ENCODE measurements at regions of chr7 and their contacts with region 1.

Region 1: GRCh38 chr7:80095545-80095944 is 39.1 kb upstream of the GNAI1 start:
- DNase-seq: no peak
- ATAC-seq: peak in 1 of 2 experiments; percentile 44; a peak in 1 of 6 replicates
- H3K4me3 ChIP-seq: no peak overlapping the region
- H3K27ac ChIP-seq: no peak overlapping the region
- H3K4me1 ChIP-seq: no peaks in the 10 kb centered on the region
- CTCF ChIP-seq: peak; percentile 58
- EP300 ChIP-seq: no peak
- POLR2A ChIP-seq: no peak
- RAD21 ChIP-seq: peak; percentile 48 to 68

Region 2: GRCh38 chr7:80039251-80039884 is 56.2 kb before region 1 on chr7:
- CTCF ChIA-PET with region 1: no interaction called
- POLR2A ChIA-PET with region 1: no interaction called
- DNase-seq: no peak
- ATAC-seq: no peak
- H3K4me3 ChIP-seq: no peak overlapping the region
- H3K27ac ChIP-seq: no peak overlapping the region
- H3K4me1 ChIP-seq: no peaks in the 10 kb centered on the region
- CTCF ChIP-seq: no peak
- EP300 ChIP-seq: no peak
- POLR2A ChIP-seq: no peak
- RAD21 ChIP-seq: no peak

Region 3: GRCh38 chr7:80066646-80067045 is 28.9 kb before region 1 on chr7:
- CTCF ChIA-PET with region 1: no interaction called
- POLR2A ChIA-PET with region 1: no interaction called
- DNase-seq: no peak
- ATAC-seq: no peak
- H3K4me3 ChIP-seq: no peak overlapping the region
- H3K27ac ChIP-seq: no peak overlapping the region
- H3K4me1 ChIP-seq: no peaks in the 10 kb centered on the region
- CTCF ChIP-seq: no peak
- EP300 ChIP-seq: no peak
- POLR2A ChIP-seq: no peak
- RAD21 ChIP-seq: no peak

Region 4: DNA sequence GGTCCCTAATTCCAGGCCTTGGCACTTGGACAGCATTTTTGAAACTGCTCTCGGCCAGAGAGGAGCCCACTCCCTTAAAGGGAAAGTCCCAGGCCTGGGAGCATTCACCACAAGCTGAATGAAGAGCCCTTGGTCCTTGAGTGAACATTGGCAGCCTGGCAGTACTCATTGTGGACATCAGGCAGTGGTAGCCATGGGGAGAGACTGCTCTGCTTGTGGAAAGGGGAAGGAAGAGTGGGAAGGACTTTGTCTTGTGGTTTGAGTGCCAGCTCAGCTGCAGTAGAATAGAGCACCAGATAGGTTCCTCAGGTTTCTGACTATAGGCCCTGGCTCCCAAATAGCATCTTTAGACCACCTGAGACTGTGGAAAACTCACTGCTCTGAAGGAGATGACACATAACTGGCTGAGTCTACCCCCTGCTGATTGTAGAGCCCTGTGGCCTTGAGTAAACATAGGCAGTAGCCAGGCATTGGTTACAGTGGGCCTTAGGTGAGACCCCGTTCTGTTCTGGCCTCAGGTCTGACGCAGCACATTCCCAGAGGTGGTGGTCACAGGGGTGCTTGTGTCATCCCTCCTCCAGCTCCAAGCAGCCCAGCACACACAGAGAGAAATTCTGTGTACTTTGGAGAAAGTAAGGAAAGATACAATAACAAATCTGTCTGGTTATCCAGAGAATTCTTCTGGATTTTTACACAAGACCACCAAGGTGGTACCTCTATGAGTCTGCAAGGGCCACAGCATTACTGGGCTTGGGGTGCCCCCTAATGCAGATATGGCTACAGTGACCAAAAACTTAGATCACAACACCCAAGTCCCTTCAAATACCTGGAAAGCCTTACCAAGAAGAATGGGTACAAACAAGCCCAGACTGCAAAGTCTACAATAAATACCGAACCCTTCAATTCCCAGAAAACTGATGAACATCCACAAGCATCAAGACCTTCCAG is 192.9 kb after region 1 on chr7:
- CTCF ChIA-PET with region 1: interaction called, 11 read pairs
- POLR2A ChIA-PET with region 1: no interaction called
- DNase-seq: peak in 1 of 2 experiments; percentile 44
- ATAC-seq: peak; percentile 90 to 97
- H3K4me3 ChIP-seq: no peak overlapping the region
- H3K27ac ChIP-seq: peak overlapping the region; percentile 37 to 75; a peak in 4 of 6 replicates
- H3K4me1 ChIP-seq: peaks cover 18% of the 10 kb centered on the region
- CTCF ChIP-seq: peak; percentile 48
- EP300 ChIP-seq: peak in 1 of 2 experiments; percentile 49; a peak in 1 of 5 replicates
- POLR2A ChIP-seq: no peak
- RAD21 ChIP-seq: peak; percentile 71 to 75

Region 5: DNA sequence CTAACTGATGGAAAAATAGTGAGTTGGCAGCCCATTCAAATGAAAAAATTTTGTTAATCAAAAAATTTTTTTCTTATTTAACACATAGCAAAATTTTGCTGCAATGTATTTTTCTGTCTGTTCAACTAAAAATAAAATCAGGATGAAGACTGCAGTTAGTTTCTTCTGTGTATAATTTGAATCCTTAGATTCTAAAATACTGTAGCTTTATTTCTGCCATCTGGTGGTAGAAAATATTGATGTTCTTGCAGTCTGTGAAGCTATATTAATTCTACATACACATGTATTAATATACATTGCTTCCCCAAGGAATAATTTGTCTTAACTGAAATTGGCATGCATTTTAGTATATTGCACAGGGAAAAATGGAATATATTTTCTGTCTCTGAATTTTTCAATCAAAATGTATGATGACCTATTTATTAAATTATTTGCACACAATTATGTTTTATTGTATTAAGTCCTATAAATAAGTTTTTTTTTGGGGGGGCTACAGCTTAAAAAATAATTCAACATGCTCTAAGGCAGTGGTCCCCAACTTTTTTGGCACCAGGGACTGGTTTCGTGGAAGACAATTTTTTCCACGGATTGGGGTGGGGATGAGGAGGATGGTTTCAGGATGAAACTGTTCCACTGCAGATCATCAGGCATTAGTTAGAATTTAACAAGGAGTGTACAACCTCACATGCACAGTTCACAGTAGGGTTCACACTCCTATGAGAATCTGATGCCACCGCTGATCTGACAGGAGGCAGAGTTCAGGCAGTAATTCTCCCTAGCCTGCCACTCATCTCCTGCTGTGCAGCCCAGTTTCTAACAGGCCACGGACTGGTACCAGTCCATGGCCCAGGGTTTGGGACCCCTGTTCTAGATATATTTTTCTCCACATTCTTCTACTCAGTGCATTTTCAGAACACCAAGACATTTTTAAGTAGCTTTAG is 297.0 kb after region 1 on chr7:
- CTCF ChIA-PET with region 1: interaction called, 21 read pairs
- POLR2A ChIA-PET with region 1: no interaction called
- DNase-seq: peak; percentile 3 to 36
- ATAC-seq: peak in 1 of 2 experiments; percentile 61; a peak in 3 of 6 replicates
- H3K4me3 ChIP-seq: no peak overlapping the region
- H3K27ac ChIP-seq: no peak overlapping the region
- H3K4me1 ChIP-seq: no peaks in the 10 kb centered on the region
- CTCF ChIP-seq: peak; percentile 70
- EP300 ChIP-seq: no peak
- POLR2A ChIP-seq: no peak
- RAD21 ChIP-seq: peak; percentile 70 to 77

Measured in A549 (cell line).